ENCODE measurements at regions of chr3 and their contacts with region 1.

Region 1: DNA sequence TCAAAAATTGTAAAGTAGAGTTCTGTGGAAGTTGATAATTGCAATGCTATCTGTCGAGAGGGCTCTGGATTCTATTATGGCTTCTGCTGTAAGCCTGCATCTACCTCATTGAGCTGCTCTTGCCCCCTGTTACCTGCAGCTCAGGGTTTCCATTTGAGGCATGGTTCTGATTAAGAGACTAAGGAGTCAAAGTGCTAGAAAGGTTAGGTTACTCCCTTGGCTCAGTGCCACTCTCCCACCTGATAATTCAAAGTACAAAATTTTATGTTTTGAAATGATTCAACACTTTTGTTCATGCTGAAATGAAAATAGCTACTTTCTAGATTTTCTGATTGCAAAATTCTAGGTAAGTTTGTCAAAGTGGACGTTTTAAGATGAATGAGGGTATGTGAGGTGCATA is 220.5 kb upstream of the SATB1 start:
- DNase-seq: no peak
- ATAC-seq: no peak
- H3K4me3 Mint-ChIP-seq: no peak overlapping the region
- H3K27ac Mint-ChIP-seq: peak overlapping the region; percentile 37
- H3K4me1 Mint-ChIP-seq: peaks cover 80% of the 10 kb centered on the region
- H3K27me3 Mint-ChIP-seq: no peaks in the 10 kb centered on the region

Region 2: DNA sequence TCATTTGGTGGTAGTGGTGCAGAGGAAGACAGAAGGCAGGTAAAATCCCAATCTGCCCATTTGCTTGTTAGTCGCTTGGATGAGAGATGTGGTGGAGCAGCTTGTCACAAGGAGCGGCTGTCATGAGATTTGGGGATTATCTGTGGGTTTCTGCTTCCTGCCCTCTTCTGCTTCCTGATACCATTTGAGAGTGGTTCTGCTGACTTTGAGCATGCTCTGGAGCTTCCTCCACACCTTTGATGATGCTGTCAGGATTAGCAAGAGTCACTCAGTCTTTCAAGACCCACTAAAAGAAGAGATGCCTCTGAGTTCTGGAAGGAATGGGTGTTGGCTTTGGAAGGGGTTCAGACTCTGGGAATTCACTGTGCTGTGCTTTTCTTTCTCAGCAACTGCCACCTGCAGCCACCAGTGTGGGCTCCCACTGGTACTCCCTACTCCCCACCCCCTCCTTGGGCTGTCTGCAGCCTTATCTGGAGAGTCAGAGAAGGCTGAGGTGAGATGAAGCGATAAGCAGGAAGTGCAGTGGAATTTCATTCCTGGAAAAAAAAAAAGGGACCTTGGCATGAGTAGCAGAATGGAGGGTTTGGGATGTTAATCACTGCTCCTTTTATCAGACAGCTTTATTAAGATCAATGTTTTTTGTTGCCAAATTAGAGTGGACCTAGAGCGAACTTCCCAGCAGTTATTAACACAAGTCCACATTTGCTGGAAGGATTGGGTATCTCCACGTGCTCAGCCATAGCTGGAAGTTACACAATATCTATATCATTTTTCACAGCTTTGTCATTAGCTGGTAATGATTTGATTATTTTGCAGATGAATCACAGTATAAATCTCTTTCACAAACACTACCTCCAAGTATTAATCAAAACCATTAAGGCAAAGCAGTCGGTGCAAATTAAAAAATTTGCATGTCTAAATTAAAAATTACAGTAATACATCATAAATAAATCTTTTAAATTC is 12.5 kb after region 1 on chr3:
- CTCF ChIA-PET with region 1: interaction called, 12 read pairs
- DNase-seq: peak; percentile 66
- ATAC-seq: peak; percentile 76
- H3K4me3 Mint-ChIP-seq: peak overlapping the region; percentile 49
- H3K27ac Mint-ChIP-seq: peak overlapping the region; percentile 83
- H3K4me1 Mint-ChIP-seq: peaks cover 72% of the 10 kb centered on the region
- H3K27me3 Mint-ChIP-seq: no peaks in the 10 kb centered on the region

Measured in activated CD8-positive, alpha-beta memory T cell treated with anti-CD3 and anti-CD28 coated beads, Interleukin-2, amount 10 ng/mL, durations not matched to agents 7 days and 5 days (primary cell).